Activated T-helper 1 cell treated with anti-CD3 and anti-CD28 coated beads, Interleukin-12 subunit alpha, Interleukin-12 subunit beta, Interleukin-2, Interleukin-4 antibody, amounts not matched to agents 30 ng/mL and 10 ng/mL and 1 ng/mL, durations not matched to agents 14 hours and 24 hours and 36 hours (primary cell): ENCODE measurements at regions of chr3 and their contacts with region 1.

Region 1: GRCh38 chr3:172750368-172751174 is at the start of gene ECT2:
- DNase-seq: peak; percentile 97
- H3K4me3 Mint-ChIP-seq: peak within 1 kb of the TSS; percentile 94
- H3K27ac Mint-ChIP-seq: peak within 1 kb of the TSS; percentile 97
- H3K4me1 Mint-ChIP-seq: peaks cover 38% of the 10 kb centered on the region
- H3K27me3 Mint-ChIP-seq: peaks cover 4% of the 10 kb centered on the region
- total RNA-seq, gene ECT2: 34.5 and 39.6 TPM in 2 replicates

Region 2: GRCh38 chr3:170869645-170870593 is 1880.7 kb before region 1 on chr3 and contains the start of gene RPL22L1:
- intact Hi-C with region 1: loop called (anchors 5 kb)
- DNase-seq: peak; percentile 90
- H3K4me3 Mint-ChIP-seq: peak within 1 kb of the TSS; percentile 98
- H3K27ac Mint-ChIP-seq: peak within 1 kb of the TSS; percentile 100
- H3K4me1 Mint-ChIP-seq: peaks cover 24% of the 10 kb centered on the region
- H3K27me3 Mint-ChIP-seq: peaks cover 4% of the 10 kb centered on the region
- total RNA-seq, gene RPL22L1: 123 and 145 TPM in 2 replicates

Region 3: DNA sequence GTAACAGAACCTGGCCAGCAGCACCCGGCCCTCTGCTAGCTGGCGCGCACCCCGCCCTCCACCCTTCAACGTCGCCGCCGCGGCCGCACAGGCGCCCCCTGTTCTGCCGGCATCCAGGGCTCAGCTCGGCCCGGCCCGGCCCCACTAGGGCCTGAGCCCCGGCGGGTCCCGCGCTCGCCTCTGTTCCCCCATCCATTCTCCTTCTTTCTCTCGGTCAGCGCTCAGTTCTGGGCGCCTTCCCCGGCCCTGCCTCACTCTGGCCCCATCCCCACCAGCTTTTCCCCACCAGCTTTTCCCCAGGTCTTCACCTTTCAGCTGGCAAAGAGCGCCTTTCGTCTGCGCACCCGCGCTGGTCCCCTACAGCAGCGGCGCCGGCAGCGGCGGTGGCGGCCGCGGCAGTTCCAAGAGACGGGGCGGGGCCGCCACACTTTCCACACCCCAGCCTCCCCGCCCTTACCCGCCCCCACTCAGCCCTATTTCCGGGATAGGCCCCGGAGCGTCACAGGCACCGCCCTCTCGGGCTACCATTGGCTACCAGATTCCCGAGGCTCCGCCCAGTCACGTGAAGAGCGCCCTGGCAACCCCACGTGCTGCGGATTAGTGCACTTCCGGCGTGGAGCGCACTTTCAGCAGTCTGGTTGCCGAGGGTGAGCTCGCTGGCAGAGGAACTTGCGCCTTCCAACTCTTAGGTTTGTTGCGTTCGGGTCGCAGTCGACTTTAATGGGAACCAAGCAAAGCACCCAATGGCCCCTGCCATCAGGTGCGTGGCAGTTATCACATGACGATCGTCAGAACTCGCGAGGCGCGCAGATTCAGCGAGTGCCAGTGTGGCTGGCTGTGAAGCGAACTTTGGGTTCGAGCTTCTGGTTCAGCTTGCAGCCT is 1842.1 kb before region 1 on chr3 and contains the start of gene EIF5A2:
- intact Hi-C with region 1: loop called (anchors 10 kb)
- DNase-seq: peak; percentile 88
- H3K4me3 Mint-ChIP-seq: peak within 1 kb of the TSS; percentile 96
- H3K27ac Mint-ChIP-seq: peak within 1 kb of the TSS; percentile 85
- H3K4me1 Mint-ChIP-seq: peaks cover 24% of the 10 kb centered on the region
- H3K27me3 Mint-ChIP-seq: peaks cover 12% of the 10 kb centered on the region
- total RNA-seq, gene EIF5A2: 8.1 and 10.5 TPM in 2 replicates

Region 4: DNA sequence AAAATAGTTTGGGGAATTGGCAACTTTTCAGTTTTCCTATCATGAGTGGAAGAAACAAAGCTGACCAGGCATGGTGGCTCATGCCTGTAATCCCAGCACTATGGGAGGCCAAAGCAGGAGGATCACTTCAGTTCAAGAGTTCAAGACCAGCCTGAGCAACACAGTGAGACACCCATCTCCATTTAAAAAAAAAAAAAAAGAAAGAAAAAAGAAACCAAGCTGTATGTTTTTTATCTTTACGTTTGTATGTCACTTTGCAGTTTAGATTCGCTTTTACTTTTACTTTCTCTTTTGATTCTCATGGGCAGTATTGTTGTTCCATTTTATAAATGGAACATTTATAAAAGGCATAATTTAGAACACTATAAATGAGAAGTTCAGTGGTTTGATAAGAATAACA is 1259.2 kb before region 1 on chr3:
- intact Hi-C with region 1: loop called (anchors 10 kb)
- DNase-seq: no peak
- H3K4me3 Mint-ChIP-seq: peak overlapping the region; percentile 71
- H3K27ac Mint-ChIP-seq: peak overlapping the region; percentile 67
- H3K4me1 Mint-ChIP-seq: peaks cover 55% of the 10 kb centered on the region
- H3K27me3 Mint-ChIP-seq: no peaks in the 10 kb centered on the region

Region 5: GRCh38 chr3:172511783-172512762 is 238.5 kb before region 1 on chr3:
- intact Hi-C with region 1: loop called (anchors 5 kb)
- DNase-seq: peak; percentile 69
- H3K4me3 Mint-ChIP-seq: peak overlapping the region; percentile 43
- H3K27ac Mint-ChIP-seq: peak overlapping the region; percentile 88
- H3K4me1 Mint-ChIP-seq: peaks cover 98% of the 10 kb centered on the region
- H3K27me3 Mint-ChIP-seq: no peaks in the 10 kb centered on the region

Region 6: GRCh38 chr3:172673210-172673679 is 77.3 kb before region 1 on chr3:
- intact Hi-C with region 1: loop called (anchors 1 kb)
- DNase-seq: peak; percentile 52
- H3K4me3 Mint-ChIP-seq: no peak overlapping the region
- H3K27ac Mint-ChIP-seq: no peak overlapping the region
- H3K4me1 Mint-ChIP-seq: peaks cover 5% of the 10 kb centered on the region
- H3K27me3 Mint-ChIP-seq: no peaks in the 10 kb centered on the region

Region 7: GRCh38 chr3:172710664-172711453 is 39.7 kb before region 1 on chr3 and contains the start of gene NCEH1:
- intact Hi-C with region 1: loop called (anchors 1 kb)
- DNase-seq: peak; percentile 69
- H3K4me3 Mint-ChIP-seq: peak within 1 kb of the TSS; percentile 91
- H3K27ac Mint-ChIP-seq: no peak within 1 kb of the TSS
- H3K4me1 Mint-ChIP-seq: peaks cover 20% of the 10 kb centered on the region
- H3K27me3 Mint-ChIP-seq: peaks cover 14% of the 10 kb centered on the region
- total RNA-seq, gene NCEH1: 7.4 and 8.8 TPM in 2 replicates